Esophagus muscularis mucosa (tissue), 4 donors: ENCODE measurements at regions of chrX and their contacts with region 1.

Region 1: GRCh38 chrX:106481341-106481740 is 130.4 kb upstream of the RADX start:
- DNase-seq: no peak
- H3K4me3 ChIP-seq: no peak overlapping the region
- H3K27ac ChIP-seq: no peak overlapping the region
- H3K4me1 ChIP-seq: no peaks in the 10 kb centered on the region
- H3K27me3 ChIP-seq: no peaks in the 10 kb centered on the region
- CTCF ChIP-seq: peak; percentile 67 to 81 (median 70)
- EP300 ChIP-seq: no peak
- POLR2A ChIP-seq: no peak

Region 2: GRCh38 chrX:106611679-106612392 is 130.5 kb after region 1 on chrX and contains the start of gene RADX:
- intact Hi-C with region 1: no loop called
- DNase-seq: peak; percentile 91
- H3K4me3 ChIP-seq: peak within 1 kb of the TSS; percentile 47 to 58 (median 51)
- H3K27ac ChIP-seq: peak within 1 kb of the TSS in 1 of 4 donors; percentile 20
- H3K4me1 ChIP-seq: peaks cover 0 to 10% (median 3%) of the 10 kb centered on the region in 4 donors
- H3K27me3 ChIP-seq: peaks cover 0 to 6% (median 0%) of the 10 kb centered on the region in 4 donors
- CTCF ChIP-seq: no peak
- EP300 ChIP-seq: no peak
- POLR2A ChIP-seq: no peak
- total RNA-seq, gene RADX: 1.7 to 2.7 (median 2.2) TPM

Region 3: DNA sequence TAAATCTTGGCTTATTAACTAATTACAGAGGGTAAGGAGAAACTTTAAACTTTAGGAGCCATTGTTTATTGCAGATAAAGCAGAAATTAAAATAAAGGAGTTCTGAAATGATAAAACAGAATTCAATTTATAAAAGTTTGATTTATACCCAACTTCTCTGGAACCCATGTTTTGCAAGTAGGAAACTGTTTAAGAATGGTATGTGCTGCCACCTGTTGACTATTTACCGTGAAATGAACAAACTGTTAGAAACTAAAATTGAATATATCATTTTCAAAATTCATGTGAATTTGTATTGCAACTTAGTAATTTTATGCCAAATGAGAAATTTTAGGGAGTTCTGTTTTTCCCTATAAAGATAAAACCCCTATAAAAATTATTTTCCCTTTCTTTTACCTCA is 310.2 kb after region 1 on chrX:
- intact Hi-C with region 1: loop called (anchors 10 kb)
- DNase-seq: no peak
- H3K4me3 ChIP-seq: no peak overlapping the region
- H3K27ac ChIP-seq: no peak overlapping the region
- H3K4me1 ChIP-seq: no peaks in the 10 kb centered on the region
- H3K27me3 ChIP-seq: no peaks in the 10 kb centered on the region
- CTCF ChIP-seq: peak in 2 of 3 experiments; percentile 17 to 32
- EP300 ChIP-seq: no peak
- POLR2A ChIP-seq: no peak